ENCODE measurements at regions of chr3 and their contacts with region 1.

Region 1: GRCh38 chr3:114454551-114455251 is 160.9 kb downstream of the TIGIT start:
- DNase-seq: peak; percentile 67
- ATAC-seq: peak; percentile 14
- H3K4me3 ChIP-seq: peak overlapping the region; percentile 11 to 71 (median 53)
- H3K4me3 Mint-ChIP-seq: no peak overlapping the region
- H3K27ac ChIP-seq: peak overlapping the region; percentile 79 to 92
- H3K27ac Mint-ChIP-seq: no peak overlapping the region
- H3K4me1 ChIP-seq: peaks cover 47 to 55% of the 10 kb centered on the region in 2 donors
- H3K4me1 Mint-ChIP-seq: peaks cover 40% of the 10 kb centered on the region
- H3K27me3 ChIP-seq: no peaks in the 10 kb centered on the region
- H3K27me3 Mint-ChIP-seq: no peaks in the 10 kb centered on the region
- CTCF ChIP-seq: no peak

Region 2: DNA sequence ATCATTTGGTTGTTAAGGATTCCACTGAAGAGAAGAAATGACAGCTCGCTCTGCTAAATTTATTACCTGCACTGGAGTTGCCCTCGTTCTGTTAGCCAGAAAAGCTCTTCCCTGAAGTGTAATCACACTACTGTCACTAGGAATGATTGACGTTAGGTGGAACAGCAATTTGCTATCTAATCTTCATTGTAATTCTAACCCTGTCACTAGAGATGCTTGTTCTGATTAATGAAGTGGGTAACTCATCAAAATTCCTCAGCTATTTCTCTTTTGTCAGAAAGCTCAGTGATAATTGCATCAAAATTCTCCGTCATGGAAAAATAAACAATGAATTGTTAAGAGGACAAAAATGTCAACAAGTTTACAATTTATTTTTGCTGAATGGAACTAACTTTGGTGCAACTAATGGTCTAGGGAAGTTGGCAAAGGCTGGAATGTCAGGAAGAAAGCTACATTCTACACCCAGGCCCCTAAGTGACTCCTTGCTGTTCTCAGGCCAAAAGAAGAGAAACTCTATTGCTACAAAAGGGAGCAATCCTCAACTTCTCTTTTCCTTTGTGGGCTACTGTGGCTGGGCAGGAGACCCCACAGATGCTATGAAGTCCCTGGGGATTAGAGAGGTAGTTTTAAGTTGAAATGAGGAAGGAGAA is 432.4 kb before region 1 on chr3:
- CTCF ChIA-PET with region 1: no interaction called
- POLR2A ChIA-PET with region 1: no interaction called
- intact Hi-C with region 1: no loop called
- DNase-seq: no peak
- ATAC-seq: no peak
- H3K4me3 ChIP-seq: no peak overlapping the region
- H3K4me3 Mint-ChIP-seq: no peak overlapping the region
- H3K27ac ChIP-seq: no peak overlapping the region
- H3K27ac Mint-ChIP-seq: no peak overlapping the region
- H3K4me1 ChIP-seq: peaks cover 3% of the 10 kb centered on the region in 2 donors
- H3K4me1 Mint-ChIP-seq: no peaks in the 10 kb centered on the region
- H3K27me3 ChIP-seq: no peaks in the 10 kb centered on the region
- H3K27me3 Mint-ChIP-seq: no peaks in the 10 kb centered on the region
- CTCF ChIP-seq: no peak

Region 3: GRCh38 chr3:114213627-114214541 is 240.8 kb before region 1 on chr3:
- CTCF ChIA-PET with region 1: no interaction called
- POLR2A ChIA-PET with region 1: interaction called, 7 read pairs
- intact Hi-C with region 1: loop called (anchors 5 kb)
- DNase-seq: peak; percentile 92
- ATAC-seq: peak; percentile 76
- H3K4me3 ChIP-seq: peak overlapping the region; percentile 42 to 76 (median 69)
- H3K4me3 Mint-ChIP-seq: no peak overlapping the region
- H3K27ac ChIP-seq: peak overlapping the region; percentile 95 to 98
- H3K27ac Mint-ChIP-seq: no peak overlapping the region
- H3K4me1 ChIP-seq: peaks cover 66 to 71% of the 10 kb centered on the region in 2 donors
- H3K4me1 Mint-ChIP-seq: peaks cover 28% of the 10 kb centered on the region
- H3K27me3 ChIP-seq: no peaks in the 10 kb centered on the region
- H3K27me3 Mint-ChIP-seq: no peaks in the 10 kb centered on the region
- CTCF ChIP-seq: no peak

Region 4: DNA sequence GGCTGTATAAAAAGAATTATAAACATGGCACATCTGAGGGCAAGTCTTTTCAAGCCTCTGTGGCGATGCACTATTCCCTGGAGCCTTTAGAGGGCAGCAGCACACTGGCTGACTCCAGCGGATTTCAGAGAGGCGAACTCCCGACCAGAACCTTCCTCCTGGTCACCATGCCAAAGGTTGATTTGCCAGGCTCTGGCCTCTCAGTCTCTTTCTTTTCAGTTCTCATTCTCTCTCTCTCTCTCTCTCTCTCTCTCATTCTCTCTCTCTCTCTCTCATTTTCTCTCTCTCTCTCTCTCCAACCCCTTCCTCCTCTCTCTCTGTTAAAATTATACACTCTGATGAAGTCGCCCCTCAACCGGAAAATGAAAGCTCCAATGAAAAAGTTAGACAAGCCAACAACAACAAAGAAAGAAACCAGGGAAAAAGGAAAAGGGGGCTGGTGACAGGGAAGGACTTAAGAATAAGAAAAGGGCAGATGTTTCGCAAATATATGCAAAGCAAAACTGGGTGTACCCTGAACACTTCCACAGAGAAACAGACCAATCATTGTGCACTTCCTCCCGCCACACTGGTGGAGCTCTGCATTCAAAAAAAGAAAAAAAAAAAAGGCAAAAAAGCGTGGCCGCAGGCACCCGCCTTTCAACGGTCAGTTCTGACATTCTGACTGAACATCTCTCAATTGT is 70.7 kb before region 1 on chr3:
- CTCF ChIA-PET with region 1: interaction called, 44 read pairs
- POLR2A ChIA-PET with region 1: no interaction called
- intact Hi-C with region 1: loop called (anchors 1 kb)
- DNase-seq: peak; percentile 73
- ATAC-seq: peak; percentile 91
- H3K4me3 ChIP-seq: peak overlapping the region in 4 of 5 experiments; percentile 26 to 58 (median 45)
- H3K4me3 Mint-ChIP-seq: peak overlapping the region; percentile 75
- H3K27ac ChIP-seq: peak overlapping the region in 1 of 2 donors; percentile 67
- H3K27ac Mint-ChIP-seq: peak overlapping the region; percentile 38
- H3K4me1 ChIP-seq: peaks cover 4 to 11% of the 10 kb centered on the region in 2 donors
- H3K4me1 Mint-ChIP-seq: peaks cover 2% of the 10 kb centered on the region
- H3K27me3 ChIP-seq: no peaks in the 10 kb centered on the region
- H3K27me3 Mint-ChIP-seq: no peaks in the 10 kb centered on the region
- CTCF ChIP-seq: peak; percentile 92

Region 5: GRCh38 chr3:114428043-114428595 is 26.6 kb before region 1 on chr3:
- CTCF ChIA-PET with region 1: interaction called, 203 read pairs
- POLR2A ChIA-PET with region 1: interaction called, 5 read pairs
- intact Hi-C with region 1: loop called (anchors 1 kb)
- DNase-seq: peak; percentile 83
- ATAC-seq: peak; percentile 90
- H3K4me3 ChIP-seq: peak overlapping the region in 1 of 5 experiments; percentile 4
- H3K4me3 Mint-ChIP-seq: peak overlapping the region; percentile 87
- H3K27ac ChIP-seq: peak overlapping the region; percentile 80 to 88
- H3K27ac Mint-ChIP-seq: peak overlapping the region; percentile 99
- H3K4me1 ChIP-seq: peaks cover 4 to 17% of the 10 kb centered on the region in 2 donors
- H3K4me1 Mint-ChIP-seq: peaks cover 48% of the 10 kb centered on the region
- H3K27me3 ChIP-seq: no peaks in the 10 kb centered on the region
- H3K27me3 Mint-ChIP-seq: no peaks in the 10 kb centered on the region
- CTCF ChIP-seq: no peak

Region 6: DNA sequence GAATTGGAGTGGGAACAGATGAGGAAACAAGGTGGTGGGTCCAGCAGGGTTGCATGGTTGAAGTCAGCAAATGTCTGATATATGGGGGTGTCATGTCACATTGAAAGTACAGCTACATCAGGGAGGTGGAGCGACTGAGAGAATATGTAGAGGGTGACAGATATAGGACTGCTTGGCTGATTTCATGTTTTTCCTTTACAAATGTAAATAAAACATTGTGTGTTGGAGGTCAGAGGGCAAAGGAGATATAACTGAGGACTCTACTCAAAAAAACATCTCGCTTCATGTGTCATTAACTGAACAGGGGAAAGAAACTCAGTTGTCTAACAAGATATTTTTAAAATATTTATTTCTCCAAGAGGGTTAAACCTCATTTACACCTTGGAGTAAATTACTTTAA is 16.8 kb after region 1 on chr3:
- CTCF ChIA-PET with region 1: interaction called, 3 read pairs
- POLR2A ChIA-PET with region 1: no interaction called
- intact Hi-C with region 1: loop called (anchors 2 kb)
- DNase-seq: no peak
- ATAC-seq: no peak
- H3K4me3 ChIP-seq: no peak overlapping the region
- H3K4me3 Mint-ChIP-seq: no peak overlapping the region
- H3K27ac ChIP-seq: no peak overlapping the region
- H3K27ac Mint-ChIP-seq: no peak overlapping the region
- H3K4me1 ChIP-seq: no peaks in the 10 kb centered on the region
- H3K4me1 Mint-ChIP-seq: no peaks in the 10 kb centered on the region
- H3K27me3 ChIP-seq: no peaks in the 10 kb centered on the region
- H3K27me3 Mint-ChIP-seq: no peaks in the 10 kb centered on the region
- CTCF ChIP-seq: no peak

Region 7: DNA sequence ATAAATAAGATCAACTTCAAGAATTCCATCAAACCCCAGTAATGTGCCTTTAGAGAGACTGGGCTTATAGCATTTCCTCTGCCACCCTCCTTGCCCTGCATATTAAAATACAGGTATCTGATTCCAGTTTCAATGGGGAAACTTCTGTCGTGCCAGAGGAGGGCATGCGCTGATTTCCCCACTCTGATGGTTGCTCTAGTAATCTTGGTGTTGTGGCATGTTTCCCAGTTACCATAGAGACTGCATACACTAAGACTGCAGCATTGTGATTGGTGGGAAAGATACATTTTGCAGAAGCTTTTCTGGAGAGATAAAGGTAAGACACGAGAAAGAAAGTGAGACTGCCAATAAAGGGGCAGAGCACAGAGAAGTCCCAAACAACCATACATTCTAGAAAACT is 64.7 kb after region 1 on chr3:
- CTCF ChIA-PET with region 1: no interaction called
- POLR2A ChIA-PET with region 1: no interaction called
- intact Hi-C with region 1: loop called (anchors 5 kb)
- DNase-seq: peak; percentile 80
- ATAC-seq: peak; percentile 95
- H3K4me3 ChIP-seq: no peak overlapping the region
- H3K4me3 Mint-ChIP-seq: no peak overlapping the region
- H3K27ac ChIP-seq: no peak overlapping the region
- H3K27ac Mint-ChIP-seq: no peak overlapping the region
- H3K4me1 ChIP-seq: peaks cover 0 to 5% of the 10 kb centered on the region in 2 donors
- H3K4me1 Mint-ChIP-seq: no peaks in the 10 kb centered on the region
- H3K27me3 ChIP-seq: no peaks in the 10 kb centered on the region
- H3K27me3 Mint-ChIP-seq: no peaks in the 10 kb centered on the region
- CTCF ChIP-seq: no peak

Measured in B cell (primary cell).